Tibial artery (tissue), 4 donors: ENCODE measurements at regions of chr22 and their contacts with region 1.

Region 1: DNA sequence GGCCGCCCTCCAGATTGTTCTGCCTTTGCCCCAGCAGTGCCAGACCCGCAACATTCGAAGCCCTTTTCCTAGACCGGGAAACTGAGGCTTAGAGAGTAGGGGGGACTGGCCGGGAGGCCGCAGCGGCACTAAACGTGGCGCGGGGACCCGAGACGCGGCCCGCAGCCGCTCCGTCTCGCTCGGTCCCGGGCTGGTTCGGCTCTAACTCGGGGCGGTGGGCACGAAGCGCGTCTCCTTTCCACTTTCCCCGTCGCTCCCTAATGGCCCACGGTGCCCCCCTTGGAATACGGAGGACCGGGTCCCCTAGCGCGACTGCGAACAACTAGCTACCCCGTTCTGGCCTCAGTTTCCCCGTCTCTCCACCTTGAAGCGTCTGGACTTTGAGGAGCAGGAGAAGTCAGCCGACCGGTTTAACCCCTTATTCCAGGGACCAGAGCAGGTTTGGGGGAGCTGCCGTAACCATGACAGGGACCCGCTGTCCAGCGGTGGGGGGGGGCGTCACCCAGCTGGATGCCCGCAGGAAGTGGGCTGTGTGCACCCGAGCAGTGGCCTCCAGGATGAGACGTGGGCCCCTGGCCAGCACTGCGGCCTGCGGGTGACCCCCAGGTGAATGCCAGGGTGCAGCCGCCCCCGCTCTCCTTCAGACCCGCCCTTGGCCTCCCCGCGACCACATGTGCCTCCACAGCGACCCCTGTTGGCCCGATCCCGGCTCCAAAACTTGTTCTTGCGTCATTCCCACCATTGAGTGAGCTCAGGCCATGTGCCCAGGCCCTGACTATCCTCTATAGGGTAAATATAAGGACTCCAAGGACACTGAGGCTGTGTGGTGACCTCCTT is 1.1 kb downstream of the CDC42EP1 start:
- DNase-seq: peak; percentile 95 to 97
- H3K4me3 ChIP-seq: peak overlapping the region; percentile 85 to 93
- H3K27ac ChIP-seq: peak overlapping the region; percentile 98 to 99
- H3K4me1 ChIP-seq: peaks cover 9 to 74% (median 65%) of the 10 kb centered on the region in 4 donors
- H3K27me3 ChIP-seq: no peaks in the 10 kb centered on the region
- CTCF ChIP-seq: peak; percentile 80 to 92

Region 2: DNA sequence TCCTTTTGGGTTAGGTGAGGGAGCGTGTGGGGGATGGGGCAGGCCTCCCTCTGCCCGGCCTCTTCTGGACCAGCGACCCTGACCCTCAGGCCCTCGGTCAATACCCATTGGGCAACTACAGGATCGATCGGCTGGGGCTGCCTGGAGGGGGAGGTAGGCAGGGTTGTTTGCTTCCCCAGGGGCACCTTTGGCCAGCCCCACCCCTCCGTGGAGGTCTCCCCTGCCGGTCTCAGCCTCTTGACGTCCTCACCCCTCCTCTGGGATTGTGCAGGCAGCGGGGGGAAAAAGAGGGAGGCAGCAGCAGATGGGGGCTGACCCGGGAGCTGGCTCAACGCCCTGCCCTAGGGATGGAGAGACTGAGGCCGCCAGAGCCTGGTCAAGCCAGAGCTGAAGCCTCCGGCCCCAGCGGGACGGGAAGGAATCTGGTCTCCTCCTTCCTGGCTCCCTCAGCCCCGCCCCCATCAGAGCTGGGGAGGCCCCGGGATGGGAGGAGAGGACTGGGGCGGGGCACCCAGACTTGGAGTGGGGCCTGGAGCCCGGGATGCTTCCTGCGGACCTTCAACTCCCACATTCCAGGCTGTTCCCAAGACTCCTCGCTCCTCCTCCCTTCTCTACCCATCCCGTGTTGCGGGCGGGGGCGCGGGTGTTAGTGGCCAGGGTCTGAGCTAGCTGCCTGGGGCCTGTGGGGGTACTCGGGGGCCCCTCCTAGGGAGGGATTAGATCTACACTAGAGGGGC is 15.6 kb before region 1 on chr22:
- intact Hi-C with region 1: loop called (anchors 2 kb)
- DNase-seq: peak; percentile 94 to 98
- H3K4me3 ChIP-seq: peak overlapping the region; percentile 7 to 37
- H3K27ac ChIP-seq: peak overlapping the region; percentile 94 to 97
- H3K4me1 ChIP-seq: peaks cover 6 to 71% (median 60%) of the 10 kb centered on the region in 4 donors
- H3K27me3 ChIP-seq: no peaks in the 10 kb centered on the region
- CTCF ChIP-seq: no peak

Region 3: DNA sequence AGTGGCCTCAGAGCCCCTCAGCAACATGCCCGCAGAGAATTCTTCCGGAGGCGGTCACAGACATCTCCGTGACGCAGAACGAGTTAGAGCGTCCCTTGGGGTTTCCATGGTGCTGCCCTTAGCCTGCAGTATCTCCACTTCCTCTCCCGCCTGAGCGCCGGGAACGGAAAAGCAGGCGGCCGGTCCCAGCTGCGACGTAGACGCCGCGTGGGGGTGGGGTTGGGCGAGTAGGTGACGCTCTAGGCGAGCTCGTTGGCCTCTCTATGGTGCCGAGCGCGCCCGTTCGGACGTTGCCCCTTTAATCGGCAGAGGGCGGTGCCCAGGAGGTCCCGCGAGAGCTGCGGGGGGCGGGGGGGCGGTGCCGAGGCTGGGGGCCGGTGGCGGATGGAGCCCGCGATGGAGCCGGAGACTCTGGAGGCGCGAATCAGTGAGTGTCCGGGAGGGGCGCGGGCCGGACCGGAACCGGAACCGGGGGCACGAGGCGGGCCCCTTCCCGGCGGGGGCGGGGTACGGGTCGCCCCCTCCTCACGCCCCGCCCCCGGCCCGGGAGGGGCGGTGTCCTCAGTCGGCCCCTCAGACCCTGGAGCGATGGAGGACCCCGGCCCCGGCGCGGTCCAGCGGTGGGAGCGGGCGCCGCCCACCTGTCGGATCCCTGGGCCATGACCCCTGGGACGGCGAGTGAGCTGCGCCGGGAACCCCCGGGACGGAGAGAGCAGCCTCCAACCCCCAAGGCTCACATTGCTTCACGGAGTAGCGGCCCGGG is 47.2 kb after region 1 on chr22 and contains the start of gene GGA1:
- intact Hi-C with region 1: loop called (anchors 5 kb)
- DNase-seq: peak; percentile 94 to 98
- H3K4me3 ChIP-seq: peak within 1 kb of the TSS; percentile 77 to 95
- H3K27ac ChIP-seq: peak within 1 kb of the TSS; percentile 88 to 97
- H3K4me1 ChIP-seq: peaks cover 0 to 46% (median 31%) of the 10 kb centered on the region in 4 donors
- H3K27me3 ChIP-seq: peaks cover 0 to 27% of the 10 kb centered on the region in 2 donors
- CTCF ChIP-seq: peak in 1 of 2 experiments; percentile 19